GM10248 (cell line): ENCODE measurements at regions of chr7 and their contacts with region 1.

Region 1: DNA sequence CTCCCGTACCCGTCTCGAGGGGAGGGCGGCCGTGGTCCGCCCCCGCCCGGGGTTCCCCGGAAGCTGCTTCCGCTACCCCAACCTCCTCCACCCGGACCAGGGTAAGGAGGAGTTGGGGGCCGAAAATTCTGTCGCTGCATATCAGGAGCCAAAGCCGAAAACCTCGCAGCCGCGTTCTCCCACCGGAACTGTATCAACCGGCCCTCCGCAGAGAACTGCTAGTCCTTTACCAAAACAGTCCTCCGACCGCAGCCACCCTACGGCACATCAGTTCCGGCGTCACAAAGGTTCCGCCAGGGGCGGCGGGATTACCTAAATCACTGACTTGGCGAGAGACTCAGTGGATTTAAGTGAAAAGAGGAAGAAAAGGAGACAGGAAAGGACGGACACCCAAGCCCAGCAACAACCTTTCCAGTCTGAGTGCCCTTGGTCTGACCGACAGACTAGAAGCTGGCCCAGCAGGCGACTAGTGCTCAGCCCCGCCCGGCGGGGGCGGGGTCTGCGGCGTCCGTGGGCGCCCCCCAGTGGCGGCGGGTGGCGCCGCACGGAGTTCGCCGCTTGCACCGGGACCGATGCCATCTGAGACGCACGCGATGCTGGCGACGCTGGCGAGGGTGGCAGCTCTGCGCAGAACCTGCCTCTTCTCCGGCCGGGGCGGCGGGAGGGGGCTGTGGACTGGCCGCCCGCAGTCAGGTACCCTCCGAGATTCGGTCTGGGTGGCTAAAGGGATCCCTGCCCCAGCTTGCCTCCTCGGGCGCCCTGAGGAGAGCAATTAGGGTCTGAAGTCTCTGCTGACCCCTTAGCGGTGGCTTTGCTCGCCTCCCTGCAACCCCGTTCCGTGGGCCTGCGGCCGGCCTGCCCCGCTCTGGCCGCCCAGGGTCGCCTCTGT is at the starts of genes MPLKIP and SUGCT:
- DNase-seq: peak; percentile 94
- CTCF ChIP-seq: peak; percentile 93

Region 2: DNA sequence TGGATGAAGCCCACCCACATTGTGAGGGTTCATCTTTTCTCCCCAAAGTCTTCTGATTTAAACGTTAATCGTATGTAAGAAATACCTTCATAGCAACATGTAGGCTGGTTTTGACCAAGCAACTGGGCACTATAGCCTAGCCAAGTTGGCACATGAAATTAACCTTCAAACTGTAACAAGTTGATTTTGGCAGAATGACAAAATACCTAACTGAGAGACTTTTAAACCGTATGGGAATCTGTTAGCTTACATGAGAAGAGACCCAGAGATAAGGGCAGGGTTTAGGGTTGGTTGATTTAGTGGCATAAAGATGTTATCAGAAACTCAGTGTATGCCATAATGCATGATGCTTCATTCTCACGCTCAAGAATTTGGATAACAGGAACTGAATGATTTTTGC is 115.1 kb before region 1 on chr7:
- CTCF ChIA-PET with region 1: no interaction called
- POLR2A ChIA-PET with region 1: no interaction called
- DNase-seq: no peak
- CTCF ChIP-seq: no peak

Region 3: GRCh38 chr7:40120020-40120419 is 14.7 kb before region 1 on chr7:
- CTCF ChIA-PET with region 1: interaction called, 14 read pairs
- POLR2A ChIA-PET with region 1: no interaction called
- DNase-seq: no peak
- CTCF ChIP-seq: no peak